ENCODE measurements at regions of chr17 and their contacts with region 1.

Region 1: GRCh38 chr17:17972126-17972951 is at the starts of genes DRC3 and TOM1L2:
- DNase-seq: peak; percentile 96 to 100 (median 100)
- ATAC-seq: peak; percentile 95
- H3K4me3 ChIP-seq: peak within 1 kb of the TSS; percentile 70
- H3K4me3 Mint-ChIP-seq: peak within 1 kb of the TSS; percentile 93 to 98 (median 97)
- H3K27ac ChIP-seq: peak within 1 kb of the TSS; percentile 85
- H3K27ac Mint-ChIP-seq: peak within 1 kb of the TSS; percentile 89 to 98 (median 95)
- H3K4me1 ChIP-seq: peaks cover 14 to 26% of the 10 kb centered on the region in 2 donors
- H3K4me1 Mint-ChIP-seq: peaks cover 30 to 57% (median 45%) of the 10 kb centered on the region in 7 donors
- H3K27me3 ChIP-seq: no peaks in the 10 kb centered on the region
- H3K27me3 Mint-ChIP-seq: no peaks in the 10 kb centered on the region
- total RNA-seq, gene DRC3: 1.00 to 2.4 TPM in 2 of 5 experiments, not detected in the others
- total RNA-seq, gene TOM1L2: 35.1 to 84.1 (median 63.4) TPM

Region 2: DNA sequence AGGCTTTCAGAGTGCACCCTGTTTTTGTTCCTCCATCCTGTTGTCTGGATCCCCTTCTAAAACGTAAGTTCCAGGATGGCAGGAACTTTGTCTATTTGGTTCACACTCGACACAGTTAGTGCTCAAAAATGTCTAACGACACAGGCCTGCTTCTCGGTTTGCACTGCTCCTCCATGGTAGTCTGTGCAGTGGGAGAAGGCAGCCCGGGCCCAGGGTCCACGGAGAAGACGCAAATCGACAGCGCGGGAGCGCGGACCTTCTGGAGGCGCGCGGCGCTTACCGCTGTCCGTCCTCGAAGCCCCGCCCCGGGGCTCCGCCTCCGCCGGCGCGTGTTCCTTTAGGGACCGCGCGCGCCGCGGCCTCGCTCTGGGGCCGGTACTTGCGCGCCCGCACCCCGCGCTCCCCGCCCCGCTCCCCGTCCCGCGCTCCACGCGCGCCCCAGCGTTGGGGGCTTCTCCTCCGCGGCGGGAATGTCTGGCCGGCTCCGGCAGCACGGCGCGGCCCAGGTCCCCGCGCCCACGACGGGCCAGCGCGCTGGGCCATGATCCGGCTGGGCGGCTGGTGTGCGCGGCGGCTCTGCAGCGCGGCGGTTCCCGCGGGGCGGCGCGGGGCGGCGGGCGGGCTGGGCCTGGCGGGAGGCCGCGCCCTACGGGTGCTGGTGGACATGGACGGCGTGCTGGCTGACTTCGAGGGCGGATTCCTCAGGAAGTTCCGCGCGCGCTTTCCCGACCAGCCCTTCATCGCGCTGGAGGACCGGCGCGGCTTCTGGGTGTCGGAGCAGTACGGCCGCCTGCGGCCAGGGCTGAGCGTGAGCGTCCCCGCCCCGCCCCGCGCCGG is 669.1 kb before region 1 on chr17 and contains the start of gene NT5M:
- CTCF ChIA-PET with region 1: no interaction called
- POLR2A ChIA-PET with region 1: no interaction called
- intact Hi-C with region 1: loop called (anchors 5 to 10 kb)
- DNase-seq: peak; percentile 33 to 84 (median 56)
- ATAC-seq: peak; percentile 77
- H3K4me3 ChIP-seq: peak within 1 kb of the TSS; percentile 58
- H3K4me3 Mint-ChIP-seq: peak within 1 kb of the TSS; percentile 82 to 96 (median 90)
- H3K27ac ChIP-seq: peak within 1 kb of the TSS; percentile 67
- H3K27ac Mint-ChIP-seq: peak within 1 kb of the TSS; percentile 53 to 93 (median 84)
- H3K4me1 ChIP-seq: peaks cover 12 to 33% of the 10 kb centered on the region in 2 donors
- H3K4me1 Mint-ChIP-seq: peaks cover 16 to 49% (median 37%) of the 10 kb centered on the region in 7 donors
- H3K27me3 ChIP-seq: no peaks in the 10 kb centered on the region
- H3K27me3 Mint-ChIP-seq: no peaks in the 10 kb centered on the region
- total RNA-seq, gene NT5M: 2.9 to 6.3 (median 3.5) TPM

Region 3: GRCh38 chr17:17694169-17695081 is 277.9 kb before region 1 on chr17:
- CTCF ChIA-PET with region 1: no interaction called
- POLR2A ChIA-PET with region 1: interaction called, 3 read pairs
- intact Hi-C with region 1: loop called in 1 of 2 experiments (anchors 1 kb)
- DNase-seq: peak; percentile 65 to 83 (median 72)
- ATAC-seq: peak; percentile 87
- H3K4me3 ChIP-seq: peak overlapping the region; percentile 84
- H3K4me3 Mint-ChIP-seq: peak overlapping the region; percentile 88 to 96 (median 92)
- H3K27ac ChIP-seq: peak overlapping the region; percentile 93
- H3K27ac Mint-ChIP-seq: peak overlapping the region; percentile 95 to 99 (median 98)
- H3K4me1 ChIP-seq: peaks cover 15 to 51% of the 10 kb centered on the region in 2 donors
- H3K4me1 Mint-ChIP-seq: peaks cover 46 to 81% (median 72%) of the 10 kb centered on the region in 7 donors
- H3K27me3 ChIP-seq: no peaks in the 10 kb centered on the region
- H3K27me3 Mint-ChIP-seq: no peaks in the 10 kb centered on the region

Region 4: DNA sequence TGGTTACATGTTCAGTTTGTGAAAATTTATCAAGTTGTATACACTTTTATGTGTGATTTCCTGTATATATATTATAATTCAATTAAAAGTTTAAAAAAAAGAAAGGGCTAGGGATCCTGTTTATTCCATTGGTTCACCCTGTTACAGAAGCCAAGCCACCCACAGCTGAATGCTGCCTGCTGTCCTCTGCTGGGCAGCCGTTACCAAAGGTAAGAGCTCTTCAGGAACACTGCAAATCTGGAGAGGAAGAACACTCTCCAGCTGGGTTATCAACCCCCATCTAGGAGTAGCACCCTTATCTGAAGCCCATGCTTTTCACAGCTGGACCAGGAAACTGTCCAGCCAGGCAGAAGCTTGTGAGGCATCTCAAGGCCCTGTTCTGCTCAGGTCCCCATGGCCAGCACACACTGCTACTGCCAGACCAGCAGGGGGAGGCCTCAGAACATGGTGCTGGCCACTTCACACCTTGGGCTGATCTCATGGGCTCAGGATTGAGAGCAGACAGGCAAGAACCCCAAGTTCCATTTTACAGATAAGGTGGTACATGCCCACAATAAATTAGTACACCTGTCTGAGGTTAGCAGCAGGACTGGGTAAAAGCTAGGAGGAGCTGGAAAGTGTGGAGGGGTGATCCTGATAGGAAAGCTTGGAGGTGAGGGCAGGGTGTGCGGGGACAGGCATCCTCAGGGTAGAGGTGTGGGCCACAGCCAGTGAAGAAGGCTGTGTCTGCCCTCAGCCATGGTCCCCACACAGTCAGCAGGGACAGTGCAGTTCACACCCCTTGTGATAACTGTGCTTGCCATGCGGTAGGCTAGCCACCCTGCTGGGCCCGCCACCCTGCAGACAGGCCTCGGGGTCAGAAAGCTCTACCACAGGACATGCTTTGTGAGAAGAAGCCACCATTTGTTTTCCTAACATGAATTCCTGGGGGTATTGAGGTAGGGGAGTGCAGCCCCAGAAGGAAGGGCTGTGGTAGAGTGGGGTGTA is 81.3 kb before region 1 on chr17:
- CTCF ChIA-PET with region 1: no interaction called
- POLR2A ChIA-PET with region 1: no interaction called
- intact Hi-C with region 1: loop called in 1 of 2 experiments (anchors 1 kb)
- DNase-seq: peak; percentile 26 to 60 (median 43)
- ATAC-seq: peak; percentile 83
- H3K4me3 ChIP-seq: no peak overlapping the region
- H3K4me3 Mint-ChIP-seq: no peak overlapping the region
- H3K27ac ChIP-seq: no peak overlapping the region
- H3K27ac Mint-ChIP-seq: peak overlapping the region in 7 of 9 donors; percentile 17 to 90 (median 54)
- H3K4me1 ChIP-seq: no peaks in the 10 kb centered on the region
- H3K4me1 Mint-ChIP-seq: peaks cover 3 to 21% (median 17%) of the 10 kb centered on the region in 7 donors
- H3K27me3 ChIP-seq: no peaks in the 10 kb centered on the region
- H3K27me3 Mint-ChIP-seq: no peaks in the 10 kb centered on the region

Region 5: GRCh38 chr17:17926840-17927449 is 45.4 kb before region 1 on chr17:
- CTCF ChIA-PET with region 1: no interaction called
- POLR2A ChIA-PET with region 1: no interaction called
- intact Hi-C with region 1: no loop called
- DNase-seq: no peak
- ATAC-seq: no peak
- H3K4me3 ChIP-seq: no peak overlapping the region
- H3K4me3 Mint-ChIP-seq: no peak overlapping the region
- H3K27ac ChIP-seq: no peak overlapping the region
- H3K27ac Mint-ChIP-seq: no peak overlapping the region
- H3K4me1 ChIP-seq: no peaks in the 10 kb centered on the region
- H3K4me1 Mint-ChIP-seq: peaks cover 3 to 56% (median 42%) of the 10 kb centered on the region in 7 donors
- H3K27me3 ChIP-seq: no peaks in the 10 kb centered on the region
- H3K27me3 Mint-ChIP-seq: no peaks in the 10 kb centered on the region

Region 6: GRCh38 chr17:18033442-18034099 is 61.2 kb after region 1 on chr17:
- CTCF ChIA-PET with region 1: interaction called, 3 read pairs
- POLR2A ChIA-PET with region 1: interaction called, 5 read pairs
- intact Hi-C with region 1: loop called (anchors 1 kb)
- DNase-seq: peak in 8 of 9 donors; percentile 37 to 81 (median 70)
- ATAC-seq: peak; percentile 98
- H3K4me3 ChIP-seq: no peak overlapping the region
- H3K4me3 Mint-ChIP-seq: no peak overlapping the region
- H3K27ac ChIP-seq: no peak overlapping the region
- H3K27ac Mint-ChIP-seq: peak overlapping the region in 4 of 9 donors; percentile 3 to 79 (median 42)
- H3K4me1 ChIP-seq: peaks cover 17 to 21% of the 10 kb centered on the region in 2 donors
- H3K4me1 Mint-ChIP-seq: peaks cover 19 to 42% (median 31%) of the 10 kb centered on the region in 7 donors
- H3K27me3 ChIP-seq: no peaks in the 10 kb centered on the region
- H3K27me3 Mint-ChIP-seq: no peaks in the 10 kb centered on the region

Region 7: GRCh38 chr17:18183334-18184142 is 211.2 kb after region 1 on chr17 and contains the start of gene ALKBH5:
- CTCF ChIA-PET with region 1: no interaction called
- POLR2A ChIA-PET with region 1: interaction called, 3 read pairs
- intact Hi-C with region 1: loop called (anchors 1 to 2 kb)
- DNase-seq: peak; percentile 97 to 99 (median 99)
- ATAC-seq: peak; percentile 88
- H3K4me3 ChIP-seq: peak within 1 kb of the TSS; percentile 78
- H3K4me3 Mint-ChIP-seq: peak within 1 kb of the TSS; percentile 83 to 99 (median 94)
- H3K27ac ChIP-seq: peak within 1 kb of the TSS; percentile 93
- H3K27ac Mint-ChIP-seq: peak within 1 kb of the TSS; percentile 96 to 99 (median 98)
- H3K4me1 ChIP-seq: peaks cover 36 to 40% of the 10 kb centered on the region in 2 donors
- H3K4me1 Mint-ChIP-seq: peaks cover 40 to 59% (median 46%) of the 10 kb centered on the region in 7 donors
- H3K27me3 ChIP-seq: no peaks in the 10 kb centered on the region
- H3K27me3 Mint-ChIP-seq: peaks cover 0 to 3% (median 0%) of the 10 kb centered on the region in 5 donors
- total RNA-seq, gene ALKBH5: 97.4 to 135 (median 108) TPM